GM10248 (cell line): ENCODE measurements at regions of chr10 and their contacts with region 1.

Region 1: GRCh38 chr10:124403548-124403947 is 15.2 kb downstream of the OAT start:
- DNase-seq: peak; percentile 70
- CTCF ChIP-seq: peak; percentile 68

Region 2: GRCh38 chr10:123994417-123995081 is 409.0 kb before region 1 on chr10:
- CTCF ChIA-PET with region 1: interaction called, 28 read pairs
- POLR2A ChIA-PET with region 1: no interaction called
- DNase-seq: peak; percentile 89
- CTCF ChIP-seq: peak; percentile 98

Region 3: GRCh38 chr10:124378881-124379471 is 24.6 kb before region 1 on chr10:
- CTCF ChIA-PET with region 1: no interaction called
- POLR2A ChIA-PET with region 1: no interaction called
- DNase-seq: no peak
- CTCF ChIP-seq: no peak

Region 4: DNA sequence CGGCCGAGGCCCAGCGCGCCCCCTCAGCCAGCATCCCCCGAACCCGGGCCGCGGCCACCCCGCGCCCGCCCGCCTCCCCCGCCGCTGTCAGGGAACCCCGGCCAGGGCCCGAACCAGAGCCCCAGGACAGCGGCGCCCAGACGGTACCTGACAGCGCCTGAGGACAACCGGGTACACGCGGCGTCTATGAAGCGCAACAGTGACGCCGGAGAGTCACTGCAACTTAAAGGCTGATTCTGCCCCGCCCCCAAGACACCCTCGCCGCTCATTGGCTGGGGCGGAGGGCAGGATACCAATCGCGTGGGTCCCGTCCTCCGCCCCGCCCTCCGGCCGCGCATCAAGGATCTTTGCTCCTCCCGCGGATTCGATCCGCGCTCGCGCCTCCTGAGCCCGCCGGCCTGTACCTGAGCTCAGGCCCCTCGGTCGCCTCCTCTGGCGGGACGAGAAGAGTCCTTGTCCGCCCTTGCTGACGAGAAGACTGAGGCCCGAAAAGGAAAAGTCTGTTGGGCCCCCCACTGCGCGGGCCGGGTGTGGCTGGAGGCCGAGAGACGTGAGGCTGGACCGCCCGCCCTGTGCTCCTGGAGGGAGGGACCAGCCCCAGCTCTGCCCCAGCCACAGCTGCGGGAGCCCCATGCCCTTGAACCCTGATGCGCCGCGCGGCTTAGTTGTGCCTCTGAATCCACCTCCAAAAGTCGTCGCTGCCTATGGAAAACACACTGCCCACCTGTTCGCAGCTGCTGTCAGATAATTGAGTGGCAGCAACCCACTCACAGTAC is 15.4 kb after region 1 on chr10 and contains the start of gene OAT:
- CTCF ChIA-PET with region 1: interaction called, 21 read pairs
- POLR2A ChIA-PET with region 1: interaction called, 8 read pairs
- DNase-seq: peak; percentile 93
- CTCF ChIP-seq: no peak

Region 5: DNA sequence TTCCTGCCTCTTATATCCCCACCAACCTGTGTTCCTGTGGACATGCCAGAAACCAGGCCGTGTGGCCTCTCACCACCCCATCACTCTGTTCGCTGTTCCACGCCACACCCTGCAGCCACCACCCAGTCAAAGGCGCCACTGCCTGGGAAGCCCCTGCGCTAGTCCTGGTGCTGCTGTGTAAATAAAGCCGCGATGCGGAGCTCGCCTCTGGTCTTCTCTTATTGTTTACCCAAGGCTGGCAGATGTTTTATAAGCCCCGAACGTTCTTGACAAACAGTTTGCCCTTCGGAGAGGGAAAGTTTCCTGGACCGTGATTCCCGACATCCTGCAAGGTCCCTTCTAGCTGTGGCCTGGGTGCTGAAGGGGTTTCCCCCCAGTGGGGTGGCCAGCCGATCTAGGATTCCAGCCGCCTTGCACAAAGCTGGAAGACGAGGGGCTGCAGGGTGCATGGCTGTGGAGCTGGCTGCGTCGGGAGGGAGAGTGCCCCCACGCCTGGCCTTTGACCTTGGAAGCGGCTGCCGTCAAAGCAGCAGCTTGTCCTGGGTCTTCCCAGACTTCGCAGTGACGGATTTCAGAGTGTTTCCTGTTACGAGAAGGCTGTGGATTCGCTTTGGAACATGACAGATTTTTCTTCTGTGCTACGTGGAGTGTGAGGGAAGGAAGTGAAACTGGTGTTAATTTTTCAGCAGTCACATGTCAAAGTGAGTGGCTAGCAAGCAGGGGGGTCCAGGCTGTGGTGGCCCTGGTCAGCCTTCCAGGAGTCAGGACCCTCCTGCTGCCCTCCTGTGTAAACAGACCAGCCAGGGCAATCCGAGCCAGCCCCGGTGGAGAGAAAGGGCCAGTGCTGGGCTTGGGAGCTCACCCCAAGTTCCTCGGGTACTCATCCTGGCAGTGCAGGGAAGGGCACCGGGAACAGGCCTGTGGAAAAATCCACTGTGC is 119.7 kb after region 1 on chr10:
- CTCF ChIA-PET with region 1: no interaction called
- POLR2A ChIA-PET with region 1: no interaction called
- DNase-seq: no peak
- CTCF ChIP-seq: no peak